ENCODE measurements at regions of chr1 and their contacts with region 1.

Region 1: DNA sequence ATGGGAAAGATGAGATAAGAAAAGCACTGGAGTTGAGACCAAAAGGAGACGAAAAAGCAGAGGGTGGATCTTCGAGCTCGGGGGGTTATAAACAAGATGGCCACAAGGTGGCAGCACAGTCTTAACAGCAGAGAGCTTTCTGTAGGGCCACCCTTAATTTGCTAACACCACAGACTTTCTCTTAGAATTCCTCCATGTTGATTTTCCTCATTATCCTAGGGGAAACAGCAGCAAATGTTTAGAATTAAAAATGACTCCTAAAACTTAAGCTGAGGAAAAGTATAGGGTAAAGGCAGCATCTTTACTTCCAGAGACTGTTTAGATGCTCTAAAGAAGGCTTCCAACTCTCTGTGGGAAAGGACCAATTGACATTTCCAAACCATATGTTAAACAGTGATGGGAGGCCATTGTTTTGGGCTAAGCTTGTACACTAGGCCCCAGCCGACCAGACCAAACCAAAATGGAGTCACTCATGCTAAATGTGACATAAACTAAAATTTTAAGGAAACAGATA is 2.5 kb upstream of the APOBEC4 start:
- DNase-seq: peak; percentile 70
- H3K4me3 ChIP-seq: no peak overlapping the region
- H3K27ac ChIP-seq: no peak overlapping the region
- H3K27me3 ChIP-seq: no peaks in the 10 kb centered on the region
- CTCF ChIP-seq: peak; percentile 91

Region 2: DNA sequence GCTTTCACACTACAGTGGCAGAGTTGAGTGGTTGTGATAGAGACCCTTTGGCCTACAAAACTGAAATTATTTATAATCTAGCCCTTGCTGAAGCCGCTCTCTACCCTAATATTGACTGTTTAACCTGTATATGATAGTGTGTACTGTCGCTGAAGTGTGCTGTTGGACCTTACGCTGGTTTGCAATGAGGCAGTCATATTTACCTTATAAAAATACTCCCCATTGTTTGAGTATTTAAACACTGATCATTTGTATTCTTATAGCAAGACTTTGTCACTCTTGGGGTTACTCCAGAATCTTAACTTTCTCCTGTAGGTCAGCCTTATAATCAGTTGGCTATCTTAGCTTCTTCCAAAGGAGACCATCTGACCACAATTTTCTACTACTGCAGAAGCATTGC is 127.0 kb before region 1 on chr1:
- CTCF ChIA-PET with region 1: no interaction called
- POLR2A ChIA-PET with region 1: no interaction called
- DNase-seq: no peak
- H3K4me3 ChIP-seq: no peak overlapping the region
- H3K27ac ChIP-seq: no peak overlapping the region
- H3K27me3 ChIP-seq: no peaks in the 10 kb centered on the region
- CTCF ChIP-seq: no peak

Region 3: GRCh38 chr1:183633633-183634343 is 21.8 kb before region 1 on chr1:
- CTCF ChIA-PET with region 1: interaction called, 19 read pairs
- POLR2A ChIA-PET with region 1: no interaction called
- DNase-seq: peak; percentile 84
- H3K4me3 ChIP-seq: peak overlapping the region; percentile 87
- H3K27ac ChIP-seq: no peak overlapping the region
- H3K27me3 ChIP-seq: no peaks in the 10 kb centered on the region
- CTCF ChIP-seq: peak; percentile 64

Region 4: GRCh38 chr1:183676586-183677189 is 21.1 kb after region 1 on chr1:
- CTCF ChIA-PET with region 1: interaction called, 14 read pairs
- POLR2A ChIA-PET with region 1: no interaction called
- DNase-seq: no peak
- H3K4me3 ChIP-seq: no peak overlapping the region
- H3K27ac ChIP-seq: no peak overlapping the region
- H3K27me3 ChIP-seq: no peaks in the 10 kb centered on the region
- CTCF ChIP-seq: no peak

Region 5: DNA sequence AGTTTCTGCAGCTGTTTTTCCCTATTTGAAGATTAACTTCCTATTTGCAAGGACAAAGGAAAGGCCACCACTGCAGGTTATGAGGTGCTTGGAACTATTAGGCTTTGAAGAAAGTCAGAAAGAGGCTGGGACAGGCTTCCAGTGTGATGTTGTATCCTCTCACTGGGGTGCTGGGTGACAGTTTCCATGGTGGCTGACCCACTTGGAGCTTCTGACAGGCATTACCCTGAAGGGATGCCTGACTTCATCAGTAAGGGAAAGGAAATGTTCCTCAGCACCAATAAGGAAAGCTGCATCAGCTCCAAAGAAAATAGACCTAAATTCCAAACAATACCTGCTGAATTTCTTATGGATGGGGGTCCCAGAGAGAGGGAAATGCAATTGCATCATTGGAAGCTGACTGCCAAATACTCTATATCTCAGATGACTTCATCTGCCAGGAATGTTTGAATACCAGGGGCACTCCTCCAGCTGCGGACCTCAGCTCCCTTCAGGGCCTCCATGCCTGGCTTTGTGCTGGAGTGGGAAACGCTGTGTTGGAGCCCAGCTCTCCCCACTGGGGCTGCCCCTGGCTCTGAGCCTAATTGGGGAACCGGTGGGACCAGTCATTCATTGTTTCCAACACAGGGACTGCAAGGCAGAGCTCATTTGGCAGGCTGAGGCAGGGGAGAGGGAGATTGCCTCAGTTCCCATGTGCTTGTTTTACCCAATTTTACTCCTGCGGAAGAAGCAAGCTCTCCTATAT is 225.9 kb after region 1 on chr1:
- CTCF ChIA-PET with region 1: interaction called, 19 read pairs
- POLR2A ChIA-PET with region 1: no interaction called
- DNase-seq: peak; percentile 56
- H3K4me3 ChIP-seq: no peak overlapping the region
- H3K27ac ChIP-seq: peak overlapping the region; percentile 47
- H3K27me3 ChIP-seq: no peaks in the 10 kb centered on the region
- CTCF ChIP-seq: no peak

Region 6: GRCh38 chr1:183908079-183908478 is 252.5 kb after region 1 on chr1:
- CTCF ChIA-PET with region 1: interaction called, 254 read pairs
- POLR2A ChIA-PET with region 1: no interaction called
- DNase-seq: no peak
- H3K4me3 ChIP-seq: no peak overlapping the region
- H3K27ac ChIP-seq: no peak overlapping the region
- H3K27me3 ChIP-seq: no peaks in the 10 kb centered on the region
- CTCF ChIP-seq: no peak

Region 7: DNA sequence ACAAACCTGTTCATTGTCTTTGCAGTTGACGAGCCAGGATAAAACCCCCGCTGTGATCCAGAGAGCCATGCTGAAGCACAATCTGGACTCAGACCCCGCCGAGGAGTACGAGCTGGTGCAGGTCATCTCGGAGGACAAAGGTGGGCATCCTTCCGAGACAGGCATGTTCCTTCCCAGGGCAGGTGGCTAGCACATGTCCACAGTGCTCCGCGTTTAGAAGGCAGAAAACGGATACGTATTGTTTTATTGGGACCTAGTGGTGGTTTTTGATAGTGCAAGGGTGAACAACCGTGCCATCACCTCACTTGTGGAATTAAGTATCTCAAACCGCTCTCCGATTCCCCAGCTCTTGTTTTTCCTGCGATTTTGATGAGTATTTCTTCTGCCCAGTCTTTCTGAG is 266.6 kb after region 1 on chr1:
- CTCF ChIA-PET with region 1: interaction called, 254 read pairs
- POLR2A ChIA-PET with region 1: no interaction called
- DNase-seq: no peak
- H3K4me3 ChIP-seq: no peak overlapping the region
- H3K27ac ChIP-seq: no peak overlapping the region
- H3K27me3 ChIP-seq: no peaks in the 10 kb centered on the region
- CTCF ChIP-seq: 0 out of 2 replicates have a peak, but pooled peaks have one; percentile 9

Region 8: GRCh38 chr1:183942933-183943693 is 287.5 kb after region 1 on chr1:
- CTCF ChIA-PET with region 1: interaction called, 11 read pairs
- POLR2A ChIA-PET with region 1: no interaction called
- DNase-seq: peak; percentile 81
- H3K4me3 ChIP-seq: no peak overlapping the region
- H3K27ac ChIP-seq: peak overlapping the region; percentile 12
- H3K27me3 ChIP-seq: no peaks in the 10 kb centered on the region
- CTCF ChIP-seq: peak; percentile 37

Measured in AG04450 (cell line).